ENCODE measurements at regions of chr1 and their contacts with region 1.

Region 1: GRCh38 chr1:110068646-110069403 is 1.6 kb downstream of the ALX3 start:
- H3K4me3 Mint-ChIP-seq: peak overlapping the region; percentile 72
- H3K27ac Mint-ChIP-seq: peak overlapping the region; percentile 65
- H3K4me1 Mint-ChIP-seq: peaks cover 33% of the 10 kb centered on the region
- H3K27me3 Mint-ChIP-seq: peaks cover 90% of the 10 kb centered on the region

Region 2: GRCh38 chr1:109984456-109985275 is 84.2 kb before region 1 on chr1 and contains the start of gene AHCYL1:
- intact Hi-C with region 1: no loop called
- H3K4me3 Mint-ChIP-seq: peak within 1 kb of the TSS; percentile 98
- H3K27ac Mint-ChIP-seq: peak within 1 kb of the TSS; percentile 99
- H3K4me1 Mint-ChIP-seq: peaks cover 35% of the 10 kb centered on the region
- H3K27me3 Mint-ChIP-seq: peaks cover 4% of the 10 kb centered on the region

Region 3: DNA sequence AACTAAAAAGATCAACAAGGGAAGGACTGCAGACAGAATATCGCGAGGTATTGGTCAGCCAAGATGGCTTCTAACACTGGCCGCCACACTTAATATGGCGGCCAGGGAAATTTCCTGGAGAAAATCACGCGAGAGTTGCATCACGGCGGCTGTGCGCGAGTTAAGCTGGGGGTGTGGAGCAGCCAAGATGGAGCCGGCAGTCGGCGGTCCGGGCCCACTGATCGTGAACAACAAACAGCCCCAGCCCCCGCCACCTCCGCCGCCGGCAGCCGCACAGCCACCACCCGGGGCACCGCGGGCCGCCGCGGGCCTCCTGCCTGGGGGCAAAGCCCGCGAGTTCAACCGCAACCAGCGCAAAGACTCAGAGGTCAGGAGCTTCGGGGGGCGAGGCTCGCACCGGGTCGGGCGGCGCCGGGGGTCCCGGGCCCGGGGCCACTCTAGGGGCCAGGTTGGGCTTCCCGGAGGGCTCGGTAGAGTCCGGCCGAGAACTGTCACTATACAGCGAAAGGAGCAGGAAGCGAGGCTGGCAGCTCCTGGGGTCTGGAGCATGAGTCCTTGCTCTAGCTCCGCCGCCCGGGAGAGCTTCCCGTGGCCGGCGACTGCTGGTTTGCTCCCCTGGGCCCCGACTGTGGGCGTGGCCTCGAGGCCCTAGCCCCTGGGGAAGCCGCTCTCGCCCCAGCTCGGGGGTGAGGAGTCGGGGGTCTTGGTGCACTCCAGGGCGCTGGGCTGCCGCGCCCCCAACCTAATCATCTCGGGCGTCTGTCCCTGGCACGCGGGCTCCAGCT is 34.2 kb before region 1 on chr1 and contains the start of gene STRIP1:
- intact Hi-C with region 1: no loop called
- H3K4me3 Mint-ChIP-seq: peak within 1 kb of the TSS; percentile 91
- H3K27ac Mint-ChIP-seq: peak within 1 kb of the TSS; percentile 93
- H3K4me1 Mint-ChIP-seq: peaks cover 39% of the 10 kb centered on the region
- H3K27me3 Mint-ChIP-seq: no peaks in the 10 kb centered on the region

Region 4: GRCh38 chr1:110084227-110085078 is 15.6 kb after region 1 on chr1:
- intact Hi-C with region 1: loop called (anchors 2 kb)
- H3K4me3 Mint-ChIP-seq: peak overlapping the region; percentile 81
- H3K27ac Mint-ChIP-seq: peak overlapping the region; percentile 82
- H3K4me1 Mint-ChIP-seq: peaks cover 37% of the 10 kb centered on the region
- H3K27me3 Mint-ChIP-seq: peaks cover 64% of the 10 kb centered on the region

Measured in dendritic cell treated with granulocyte-macrophage colony-stimulating factor and Interleukin-4, amounts not matched to agents 40 ng/mL and 50 ng/mL, for 4 days (primary cell).